ENCODE measurements at regions of chr2 and their contacts with region 1.

Region 1: GRCh38 chr2:144946263-144946662 is 426.3 kb upstream of the ZEB2 start:
- DNase-seq: no peak
- H3K4me3 ChIP-seq: no peak overlapping the region
- H3K27ac ChIP-seq: peak overlapping the region; percentile 71
- H3K4me1 ChIP-seq: peaks cover 53% of the 10 kb centered on the region
- H3K27me3 ChIP-seq: no peaks in the 10 kb centered on the region
- CTCF ChIP-seq: no peak

Region 2: GRCh38 chr2:144332356-144333142 is 613.7 kb before region 1 on chr2:
- CTCF ChIA-PET with region 1: no interaction called
- dilution Hi-C with region 1: no loop called
- in situ Hi-C with region 1: no loop called
- intact Hi-C with region 1: loop called (anchors 1 kb)
- DNase-seq: peak; percentile 85
- H3K4me3 ChIP-seq: peak overlapping the region; percentile 49 to 91 (median 77)
- H3K27ac ChIP-seq: peak overlapping the region; percentile 73
- H3K4me1 ChIP-seq: peaks cover 10% of the 10 kb centered on the region
- H3K27me3 ChIP-seq: no peaks in the 10 kb centered on the region
- CTCF ChIP-seq: no peak

Region 3: GRCh38 chr2:144886862-144887261 is 59.4 kb before region 1 on chr2:
- CTCF ChIA-PET with region 1: no interaction called
- dilution Hi-C with region 1: no loop called
- in situ Hi-C with region 1: no loop called
- intact Hi-C with region 1: no loop called
- DNase-seq: no peak
- H3K4me3 ChIP-seq: no peak overlapping the region
- H3K27ac ChIP-seq: no peak overlapping the region
- H3K4me1 ChIP-seq: no peaks in the 10 kb centered on the region
- H3K27me3 ChIP-seq: no peaks in the 10 kb centered on the region
- CTCF ChIP-seq: no peak

Region 4: DNA sequence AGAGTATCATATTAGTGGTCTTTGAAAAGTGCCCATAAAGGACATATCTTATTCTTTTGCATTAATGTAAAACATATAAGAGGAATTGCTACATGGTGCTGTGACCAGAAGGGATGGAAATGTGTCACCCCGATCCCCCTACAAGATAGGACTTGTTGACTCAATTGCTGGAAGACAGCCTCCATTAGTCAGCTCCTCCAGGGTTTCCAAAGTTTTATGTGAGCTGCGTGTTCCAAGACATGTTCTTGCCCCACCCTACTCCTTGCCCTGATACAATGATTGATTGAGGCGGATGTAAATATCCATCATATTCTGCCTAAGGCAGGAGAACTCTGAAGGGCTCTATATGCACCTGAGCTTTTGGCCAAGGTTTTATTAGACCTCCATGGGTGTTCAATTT is 114.6 kb after region 1 on chr2:
- CTCF ChIA-PET with region 1: no interaction called
- dilution Hi-C with region 1: no loop called
- in situ Hi-C with region 1: no loop called
- intact Hi-C with region 1: loop called (anchors 5 kb)
- DNase-seq: peak; percentile 98
- H3K4me3 ChIP-seq: no peak overlapping the region
- H3K27ac ChIP-seq: peak overlapping the region; percentile 43
- H3K4me1 ChIP-seq: peaks cover 30% of the 10 kb centered on the region
- H3K27me3 ChIP-seq: no peaks in the 10 kb centered on the region
- CTCF ChIP-seq: no peak